ENCODE measurements at regions of chr17 and their contacts with region 1.

Region 1: DNA sequence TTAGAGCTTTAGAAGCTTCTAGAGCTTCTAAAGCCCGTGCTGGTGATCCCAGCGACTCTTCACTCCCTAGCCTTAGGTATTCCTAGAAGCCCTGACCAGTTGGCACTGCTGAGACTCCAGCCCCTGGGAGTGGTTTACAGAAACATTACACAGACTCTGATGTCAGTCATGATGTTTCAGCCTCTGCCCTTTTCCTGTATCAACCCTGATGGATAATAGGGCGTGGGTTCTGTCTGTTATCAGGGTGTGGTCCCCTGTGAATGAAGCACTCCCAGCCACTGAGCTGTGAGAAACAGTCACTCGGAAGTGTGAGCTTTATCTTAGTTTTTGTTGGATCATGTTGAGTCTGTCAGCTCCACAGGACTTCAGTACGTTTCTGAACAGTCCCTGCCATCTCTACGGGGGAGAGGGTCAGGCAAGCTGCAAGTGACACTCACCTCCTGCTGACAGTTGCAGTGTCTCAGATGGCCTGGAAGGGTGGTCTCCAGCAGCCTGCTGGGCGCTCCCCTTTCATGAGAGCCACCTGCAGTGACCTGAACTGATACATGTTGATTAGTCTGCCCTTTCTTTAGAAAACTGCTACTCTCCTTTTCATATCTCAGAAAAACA is 12.8 kb downstream of the GOSR2 start:
- DNase-seq: no peak
- ATAC-seq: peak in 1 of 4 donors; percentile 44
- H3K4me3 ChIP-seq: no peak overlapping the region
- H3K27ac ChIP-seq: no peak overlapping the region
- H3K4me1 ChIP-seq: no peaks in the 10 kb centered on the region
- H3K27me3 ChIP-seq: no peaks in the 10 kb centered on the region
- CTCF ChIP-seq: no peak

Region 2: GRCh38 chr17:46847204-46848191 is 88.3 kb before region 1 on chr17:
- intact Hi-C with region 1: loop called in 1 of 3 experiments (anchors 5 kb)
- DNase-seq: no peak
- ATAC-seq: no peak
- H3K4me3 ChIP-seq: no peak overlapping the region
- H3K27ac ChIP-seq: no peak overlapping the region
- H3K4me1 ChIP-seq: no peaks in the 10 kb centered on the region
- H3K27me3 ChIP-seq: no peaks in the 10 kb centered on the region
- CTCF ChIP-seq: no peak

Region 3: GRCh38 chr17:46889992-46890564 is 45.7 kb before region 1 on chr17:
- intact Hi-C with region 1: no loop called
- DNase-seq: no peak
- ATAC-seq: no peak
- H3K4me3 ChIP-seq: no peak overlapping the region
- H3K27ac ChIP-seq: no peak overlapping the region
- H3K4me1 ChIP-seq: no peaks in the 10 kb centered on the region
- H3K27me3 ChIP-seq: no peaks in the 10 kb centered on the region
- CTCF ChIP-seq: no peak